Endothelial cell of umbilical vein (primary cell): ENCODE measurements at regions of chr14 and their contacts with region 1.

Region 1: GRCh38 chr14:39102969-39103957 is at the start of gene SEC23A:
- DNase-seq: peak; percentile 91
- H3K4me3 ChIP-seq: peak within 1 kb of the TSS; percentile 70 to 98 (median 92)
- H3K27ac ChIP-seq: peak within 1 kb of the TSS; percentile 83
- H3K4me1 ChIP-seq: peaks cover 16% of the 10 kb centered on the region
- H3K27me3 ChIP-seq: no peaks in the 10 kb centered on the region
- CTCF ChIP-seq: no peak
- POLR2A ChIP-seq: peak; percentile 80
- total RNA-seq, gene SEC23A: 155 and 156 TPM in 2 replicates

Region 2: DNA sequence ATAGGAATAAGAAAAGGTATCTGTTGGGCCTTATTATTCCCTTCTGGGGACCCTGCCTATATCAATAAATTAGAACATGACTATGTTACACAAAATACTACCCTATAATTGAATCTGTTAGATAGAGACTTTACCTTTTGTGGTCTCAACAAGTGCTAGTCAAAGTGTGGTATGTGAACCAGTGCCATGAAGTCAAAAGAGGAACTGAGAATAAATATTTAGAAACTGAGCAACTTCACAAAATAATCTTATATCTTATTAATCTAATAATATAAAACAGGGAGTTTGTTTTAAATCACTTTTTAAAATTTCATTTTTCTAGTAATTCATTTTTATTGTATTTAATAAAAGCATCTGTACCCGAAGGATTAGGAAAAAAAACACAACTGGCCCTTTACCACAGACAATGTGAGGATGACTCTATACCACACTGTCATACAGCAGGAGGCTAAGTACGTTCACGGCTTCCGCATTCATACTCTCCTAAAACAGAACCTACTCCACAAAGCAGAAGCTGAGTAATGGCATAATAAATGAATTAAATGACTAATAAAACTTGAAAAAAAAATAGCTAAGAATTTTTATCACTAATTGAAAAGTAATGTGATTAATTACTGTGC is 42.3 kb before region 1 on chr14:
- CTCF ChIA-PET with region 1: no interaction called
- POLR2A ChIA-PET with region 1: no interaction called
- dilution Hi-C with region 1: no loop called
- intact Hi-C with region 1: no loop called
- DNase-seq: no peak
- H3K4me3 ChIP-seq: no peak overlapping the region
- H3K27ac ChIP-seq: no peak overlapping the region
- H3K4me1 ChIP-seq: no peaks in the 10 kb centered on the region
- H3K27me3 ChIP-seq: no peaks in the 10 kb centered on the region
- CTCF ChIP-seq: no peak
- POLR2A ChIP-seq: no peak

Region 3: GRCh38 chr14:39174560-39175444 is 71.5 kb after region 1 on chr14 and contains the start of gene PNN:
- CTCF ChIA-PET with region 1: interaction called, 3 read pairs
- POLR2A ChIA-PET with region 1: interaction called, 6 read pairs
- dilution Hi-C with region 1: no loop called
- intact Hi-C with region 1: loop called (anchors 1 kb)
- DNase-seq: peak; percentile 100
- H3K4me3 ChIP-seq: peak within 1 kb of the TSS; percentile 69 to 92 (median 92)
- H3K27ac ChIP-seq: peak within 1 kb of the TSS; percentile 87
- H3K4me1 ChIP-seq: peaks cover 43% of the 10 kb centered on the region
- H3K27me3 ChIP-seq: no peaks in the 10 kb centered on the region
- CTCF ChIP-seq: no peak
- POLR2A ChIP-seq: peak; percentile 83
- total RNA-seq, gene PNN: 79.4 and 83.5 TPM in 2 replicates

Region 4: DNA sequence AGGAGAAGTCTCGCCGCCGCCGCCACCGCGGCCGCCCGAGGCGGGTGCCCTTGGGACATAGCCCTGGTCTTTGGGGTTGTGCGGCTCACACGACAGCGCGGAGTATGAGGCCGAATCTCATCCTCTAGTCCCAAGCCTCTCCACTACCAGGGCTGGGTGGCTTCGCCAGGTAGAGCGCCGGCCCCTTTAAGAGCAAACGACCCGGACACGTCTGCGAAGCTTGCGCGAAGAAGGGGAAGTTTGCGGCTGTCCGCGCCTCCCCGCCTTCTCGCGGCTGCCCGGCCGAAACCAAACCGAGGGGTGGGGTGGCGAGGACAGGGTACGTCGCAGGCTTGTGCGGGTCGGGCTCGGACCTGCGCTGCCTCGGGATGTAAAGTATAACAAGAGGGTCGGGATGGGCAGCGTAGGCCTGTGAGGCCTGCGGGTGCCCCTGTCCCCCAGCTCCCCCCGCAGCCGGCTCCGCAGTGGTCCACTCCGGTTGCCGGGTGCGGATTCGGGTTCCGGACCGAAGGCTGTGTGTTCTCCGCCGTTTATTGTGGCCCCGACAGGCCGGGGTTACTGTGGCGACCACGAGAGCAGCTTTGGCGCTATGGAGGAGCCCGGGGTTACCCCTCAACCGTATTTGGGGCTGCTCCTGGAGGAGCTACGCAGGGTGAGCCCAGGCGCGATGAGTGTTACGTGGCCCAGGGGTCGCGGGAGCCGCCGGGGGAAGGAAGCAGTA is 163.8 kb after region 1 on chr14:
- CTCF ChIA-PET with region 1: interaction called, 3 read pairs
- POLR2A ChIA-PET with region 1: no interaction called
- dilution Hi-C with region 1: no loop called
- intact Hi-C with region 1: loop called (anchors 5 kb)
- DNase-seq: peak; percentile 86
- H3K4me3 ChIP-seq: peak overlapping the region; percentile 50 to 92 (median 84)
- H3K27ac ChIP-seq: peak overlapping the region; percentile 92
- H3K4me1 ChIP-seq: peaks cover 18% of the 10 kb centered on the region
- H3K27me3 ChIP-seq: no peaks in the 10 kb centered on the region
- CTCF ChIP-seq: no peak
- POLR2A ChIP-seq: peak; percentile 71

Region 5: GRCh38 chr14:39426605-39427004 is 323.3 kb after region 1 on chr14:
- CTCF ChIA-PET with region 1: interaction called, 35 read pairs
- POLR2A ChIA-PET with region 1: interaction called, 9 read pairs
- dilution Hi-C with region 1: no loop called
- intact Hi-C with region 1: loop called (anchors 1 kb)
- DNase-seq: peak; percentile 77
- H3K4me3 ChIP-seq: peak overlapping the region in 1 of 3 experiments; percentile 42
- H3K27ac ChIP-seq: no peak overlapping the region
- H3K4me1 ChIP-seq: peaks cover 31% of the 10 kb centered on the region
- H3K27me3 ChIP-seq: no peaks in the 10 kb centered on the region
- CTCF ChIP-seq: peak in 1 of 2 donors; percentile 3
- POLR2A ChIP-seq: no peak